ENCODE measurements at regions of chr6 and their contacts with region 1.

Region 1: GRCh38 chr6:127641905-127642304 is 64.9 kb downstream of the C6orf58 start:
- DNase-seq: no peak
- ATAC-seq: peak; percentile 75
- H3K4me3 ChIP-seq: no peak overlapping the region
- H3K27ac ChIP-seq: no peak overlapping the region
- H3K4me1 ChIP-seq: no peaks in the 10 kb centered on the region
- H3K27me3 ChIP-seq: no peaks in the 10 kb centered on the region
- CTCF ChIP-seq: peak; percentile 62 to 63 (median 62); a peak in 5 of 6 replicates
- EP300 ChIP-seq: no peak
- POLR2A ChIP-seq: no peak
- RAD21 ChIP-seq: peak; percentile 74

Region 2: DNA sequence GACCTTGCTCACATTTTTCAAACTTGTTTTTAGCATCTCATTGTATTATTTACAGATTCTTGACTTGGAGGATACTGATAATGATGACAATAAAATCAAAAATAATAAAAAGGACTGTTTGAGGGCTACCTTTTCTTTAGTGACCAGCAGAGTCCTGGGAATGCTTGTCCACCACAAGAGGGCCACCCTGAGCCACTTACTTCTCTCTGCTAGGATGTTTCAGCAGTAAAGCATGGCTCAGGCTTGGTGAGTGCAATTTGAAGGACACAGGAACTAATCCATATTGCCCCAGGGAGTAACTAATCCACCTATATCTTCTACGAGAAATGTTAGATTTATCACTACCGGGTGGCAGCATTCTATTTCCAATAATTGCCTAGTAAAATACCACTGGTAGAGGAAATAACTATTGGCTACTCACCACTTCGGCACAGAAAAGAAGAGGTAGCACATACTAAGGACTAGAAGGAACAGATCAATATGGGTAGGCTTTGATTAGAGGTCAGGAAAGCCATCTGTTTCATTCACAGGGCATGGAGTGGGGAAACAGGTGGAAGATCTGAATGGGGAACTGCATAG is 176.9 kb before region 1 on chr6:
- CTCF ChIA-PET with region 1: interaction called, 8 read pairs
- POLR2A ChIA-PET with region 1: no interaction called
- RAD21 ChIA-PET with region 1: no interaction called
- SMC1A ChIA-PET with region 1: no interaction called
- in situ Hi-C with region 1: no loop called
- intact Hi-C with region 1: loop called (anchors 1 kb)
- DNase-seq: no peak
- ATAC-seq: peak; percentile 98
- H3K4me3 ChIP-seq: no peak overlapping the region
- H3K27ac ChIP-seq: no peak overlapping the region
- H3K4me1 ChIP-seq: no peaks in the 10 kb centered on the region
- H3K27me3 ChIP-seq: no peaks in the 10 kb centered on the region
- CTCF ChIP-seq: peak; percentile 81 to 88 (median 83)
- EP300 ChIP-seq: no peak
- POLR2A ChIP-seq: no peak
- RAD21 ChIP-seq: peak; percentile 88

Region 3: DNA sequence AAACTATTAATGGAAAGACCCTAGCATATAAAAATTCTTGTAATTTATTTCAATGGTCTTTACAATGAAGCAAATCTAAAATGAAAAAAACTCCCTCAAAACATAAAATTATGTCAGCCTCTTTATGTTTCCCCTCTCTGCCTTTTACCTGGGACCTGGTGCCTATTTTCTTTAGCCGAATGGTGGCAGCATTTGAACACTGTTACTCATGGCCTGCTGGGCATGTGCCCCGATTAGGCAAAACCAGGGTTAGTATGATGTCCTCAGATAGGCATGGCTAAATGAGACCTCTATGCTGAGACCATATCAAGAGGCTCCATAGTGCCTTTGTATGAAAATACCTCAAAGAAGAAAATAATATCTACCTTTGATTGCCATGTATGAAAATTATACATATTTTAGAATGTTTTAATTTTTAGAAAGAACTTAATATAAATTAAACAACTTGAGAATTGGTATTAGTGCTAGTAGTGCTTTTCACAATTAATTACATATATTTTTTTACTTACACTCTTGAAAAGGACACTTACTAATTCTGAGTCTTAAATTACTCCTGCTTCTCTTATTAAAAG is 87.4 kb before region 1 on chr6:
- CTCF ChIA-PET with region 1: interaction called, 11 read pairs
- POLR2A ChIA-PET with region 1: no interaction called
- RAD21 ChIA-PET with region 1: no interaction called
- SMC1A ChIA-PET with region 1: interaction called, 6 read pairs
- in situ Hi-C with region 1: no loop called
- intact Hi-C with region 1: loop called (anchors 1 kb)
- DNase-seq: no peak
- ATAC-seq: peak; percentile 91
- H3K4me3 ChIP-seq: no peak overlapping the region
- H3K27ac ChIP-seq: no peak overlapping the region
- H3K4me1 ChIP-seq: no peaks in the 10 kb centered on the region
- H3K27me3 ChIP-seq: no peaks in the 10 kb centered on the region
- CTCF ChIP-seq: peak; percentile 42 to 53 (median 47); a peak in 4 of 6 replicates
- EP300 ChIP-seq: no peak
- POLR2A ChIP-seq: no peak
- RAD21 ChIP-seq: peak; percentile 76

Region 4: GRCh38 chr6:127630800-127631199 is 11.1 kb before region 1 on chr6:
- CTCF ChIA-PET with region 1: interaction called, 13 read pairs
- POLR2A ChIA-PET with region 1: no interaction called
- RAD21 ChIA-PET with region 1: no interaction called
- SMC1A ChIA-PET with region 1: interaction called, 3 read pairs
- in situ Hi-C with region 1: no loop called
- intact Hi-C with region 1: no loop called
- DNase-seq: no peak
- ATAC-seq: no peak
- H3K4me3 ChIP-seq: no peak overlapping the region
- H3K27ac ChIP-seq: no peak overlapping the region
- H3K4me1 ChIP-seq: no peaks in the 10 kb centered on the region
- H3K27me3 ChIP-seq: no peaks in the 10 kb centered on the region
- CTCF ChIP-seq: no peak
- EP300 ChIP-seq: no peak
- POLR2A ChIP-seq: no peak
- RAD21 ChIP-seq: no peak

Measured in GM12878 (cell line).